ENCODE measurements at regions of chr1 and their contacts with region 1.

Region 1: DNA sequence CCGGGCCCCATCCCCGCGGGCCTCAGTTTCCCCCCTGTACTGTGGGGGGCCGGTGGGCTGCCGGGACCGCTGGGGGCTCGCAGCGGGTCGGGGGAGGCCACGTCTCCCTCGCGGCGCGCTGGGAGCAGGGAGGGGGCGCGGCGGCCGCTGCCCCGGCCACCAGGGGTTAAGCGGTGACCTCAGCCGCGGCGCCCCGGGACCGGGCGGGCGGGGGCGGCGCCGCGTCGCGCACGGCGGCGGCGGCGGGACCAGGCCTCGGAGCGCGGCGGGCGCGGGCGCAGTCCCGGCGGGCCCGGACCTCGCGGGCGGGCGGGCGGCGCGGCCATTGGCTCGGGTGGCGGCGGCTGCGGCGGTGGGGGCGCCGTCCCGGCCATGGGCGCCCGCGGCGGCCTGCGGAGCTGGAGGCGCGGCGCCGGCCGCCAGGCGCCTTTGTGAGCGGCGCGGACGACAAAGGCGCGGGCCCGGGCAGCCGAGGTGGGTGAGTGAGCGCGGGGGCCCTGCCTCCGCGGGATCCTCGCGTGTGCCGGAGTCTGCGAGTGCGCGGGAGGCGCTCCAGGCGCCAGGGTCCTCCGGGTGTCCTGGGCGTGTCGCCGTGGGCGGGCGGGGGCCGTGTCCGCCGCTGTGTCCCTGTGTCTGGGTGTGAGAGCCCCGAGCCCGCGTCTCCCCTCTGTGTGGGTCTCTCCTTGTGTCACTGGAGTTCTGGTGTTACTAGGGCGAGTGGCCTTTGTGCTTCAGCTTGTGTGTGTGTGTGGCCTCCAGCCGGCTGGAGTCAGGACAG is at the start of gene ARHGEF10L:
- DNase-seq: no peak
- ATAC-seq: peak; percentile 6
- H3K4me3 Mint-ChIP-seq: peak within 1 kb of the TSS; percentile 76
- H3K27ac Mint-ChIP-seq: no peak within 1 kb of the TSS
- H3K4me1 Mint-ChIP-seq: peaks cover 23% of the 10 kb centered on the region
- H3K27me3 Mint-ChIP-seq: peaks cover 16% of the 10 kb centered on the region
- CTCF ChIP-seq: no peak
- total RNA-seq, gene ARHGEF10L: 0.59 and 0.62 TPM in 2 replicates

Region 2: GRCh38 chr1:16430606-16431005 is 1109.1 kb before region 1 on chr1:
- CTCF ChIA-PET with region 1: no interaction called
- POLR2A ChIA-PET with region 1: no interaction called
- intact Hi-C with region 1: no loop called
- DNase-seq: no peak
- ATAC-seq: no peak
- H3K4me3 Mint-ChIP-seq: no peak overlapping the region
- H3K27ac Mint-ChIP-seq: no peak overlapping the region
- H3K4me1 Mint-ChIP-seq: peaks cover 16% of the 10 kb centered on the region
- H3K27me3 Mint-ChIP-seq: no peaks in the 10 kb centered on the region
- CTCF ChIP-seq: no peak

Region 3: DNA sequence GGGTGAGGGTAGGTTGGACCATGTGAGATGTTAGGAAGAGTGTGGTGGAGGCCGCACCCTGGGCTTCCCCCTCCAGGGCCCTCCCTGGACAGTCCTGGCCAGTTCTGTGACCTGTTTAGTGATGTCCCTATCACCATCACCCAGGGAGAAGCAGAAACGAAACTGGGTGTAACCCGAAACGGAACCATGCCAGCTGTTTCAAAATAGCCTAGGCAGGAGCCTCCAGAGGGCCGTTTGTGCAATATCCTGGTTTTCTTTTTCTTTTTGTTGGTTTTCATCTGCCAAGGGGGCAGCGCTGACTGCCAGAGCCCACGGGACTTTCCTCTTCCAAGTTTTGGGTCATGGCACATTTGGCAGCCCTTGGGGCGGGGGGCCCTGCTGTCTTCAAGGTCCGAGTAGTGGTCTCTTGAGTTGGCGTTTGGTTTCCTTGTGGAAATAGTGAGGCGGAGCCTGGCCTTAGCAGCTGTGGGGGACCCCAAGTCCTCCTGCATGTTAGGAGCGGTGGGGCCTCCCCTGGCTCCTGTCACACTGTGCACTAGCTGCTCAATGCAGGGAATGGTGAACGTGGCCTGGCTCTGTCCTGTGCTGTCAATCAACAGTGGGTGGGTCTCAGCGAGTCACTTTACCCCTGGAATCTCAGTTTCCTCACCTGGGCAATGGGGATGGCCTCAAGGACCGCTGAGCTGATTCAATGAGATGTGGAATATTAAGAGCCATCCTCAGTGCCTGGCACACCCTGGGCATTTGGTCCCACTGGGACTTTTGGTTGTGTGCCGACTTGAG is 90.6 kb after region 1 on chr1:
- CTCF ChIA-PET with region 1: no interaction called
- POLR2A ChIA-PET with region 1: no interaction called
- intact Hi-C with region 1: loop called (anchors 10 kb)
- DNase-seq: no peak
- ATAC-seq: peak; percentile 40
- H3K4me3 Mint-ChIP-seq: no peak overlapping the region
- H3K27ac Mint-ChIP-seq: no peak overlapping the region
- H3K4me1 Mint-ChIP-seq: peaks cover 30% of the 10 kb centered on the region
- H3K27me3 Mint-ChIP-seq: no peaks in the 10 kb centered on the region
- CTCF ChIP-seq: no peak

Measured in activated B cell treated with CpG ODN at 0.5 μM for 24 hours (primary cell).